ENCODE measurements at regions of chr2 and their contacts with region 1.

Region 1: DNA sequence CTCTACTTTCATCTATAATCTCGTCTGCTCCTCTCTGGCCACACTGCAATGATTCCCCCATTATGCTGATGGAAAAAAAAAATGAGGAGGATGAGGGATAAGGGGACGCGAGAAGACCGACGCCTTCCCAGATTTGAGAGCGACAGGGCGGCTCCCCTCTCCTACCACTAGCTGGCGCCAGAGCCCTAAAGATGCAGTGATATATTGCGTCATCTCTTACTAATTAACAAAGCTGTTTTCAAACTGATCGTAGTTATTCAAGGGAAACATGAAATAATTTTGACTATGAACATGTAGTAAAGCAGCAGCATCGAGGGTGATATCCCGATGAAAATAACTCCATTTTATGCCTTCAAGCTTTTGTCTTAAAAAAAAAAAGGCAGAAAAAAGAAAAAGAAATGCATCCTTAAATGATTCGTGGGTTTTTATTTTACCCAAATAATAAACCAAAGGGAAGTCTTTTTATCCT is 48.0 kb upstream of the HNRNPA3 start:
- DNase-seq: peak; percentile 90
- H3K4me3 Mint-ChIP-seq: no peak overlapping the region
- H3K27ac Mint-ChIP-seq: no peak overlapping the region
- H3K4me1 Mint-ChIP-seq: peaks cover 21% of the 10 kb centered on the region
- H3K27me3 Mint-ChIP-seq: no peaks in the 10 kb centered on the region

Region 2: GRCh38 chr2:176729706-176730569 is 434.7 kb before region 1 on chr2:
- CTCF ChIA-PET with region 1: no interaction called
- intact Hi-C with region 1: no loop called
- DNase-seq: no peak
- H3K4me3 Mint-ChIP-seq: no peak overlapping the region
- H3K27ac Mint-ChIP-seq: no peak overlapping the region
- H3K4me1 Mint-ChIP-seq: no peaks in the 10 kb centered on the region
- H3K27me3 Mint-ChIP-seq: no peaks in the 10 kb centered on the region

Region 3: DNA sequence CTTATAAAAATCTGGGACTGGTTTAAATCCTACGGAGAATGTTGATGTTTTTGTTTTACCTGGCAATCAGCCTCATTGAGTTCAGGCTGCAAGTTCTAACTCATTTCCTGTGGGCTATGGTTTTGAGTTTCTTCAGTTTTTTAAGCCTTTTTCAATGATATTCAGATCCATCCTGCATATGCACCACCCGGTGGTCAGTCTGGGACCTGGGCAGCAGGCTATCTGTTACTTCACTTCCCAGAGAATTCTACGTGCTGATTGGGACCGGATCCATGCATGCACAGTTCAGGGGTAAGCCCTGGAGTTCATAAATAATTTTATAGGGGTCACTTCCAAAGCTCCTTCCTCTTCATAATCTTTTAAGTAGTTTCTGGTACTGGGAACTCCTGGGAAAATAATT is 291.2 kb before region 1 on chr2:
- CTCF ChIA-PET with region 1: no interaction called
- intact Hi-C with region 1: no loop called
- DNase-seq: no peak
- H3K4me3 Mint-ChIP-seq: no peak overlapping the region
- H3K27ac Mint-ChIP-seq: no peak overlapping the region
- H3K4me1 Mint-ChIP-seq: no peaks in the 10 kb centered on the region
- H3K27me3 Mint-ChIP-seq: peaks cover 2% of the 10 kb centered on the region

Region 4: DNA sequence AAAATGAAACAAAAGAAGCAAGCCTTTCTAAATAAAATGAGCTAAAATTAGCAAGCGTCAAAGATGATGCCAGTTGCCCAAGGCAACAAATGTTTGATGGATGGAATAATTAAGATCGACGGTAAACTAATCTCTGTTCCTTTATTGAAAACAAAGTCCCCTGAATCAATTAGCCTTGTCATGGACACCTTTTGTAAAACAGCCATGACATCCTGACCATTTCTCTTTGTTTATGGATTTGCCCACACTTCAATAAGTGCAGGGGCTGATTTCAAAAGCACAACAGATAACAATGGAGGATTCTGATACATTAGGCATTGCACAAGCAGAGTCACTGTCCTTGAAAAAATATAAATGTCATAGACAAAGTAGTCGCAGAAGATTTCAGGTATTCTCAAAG is 112.1 kb before region 1 on chr2:
- CTCF ChIA-PET with region 1: no interaction called
- intact Hi-C with region 1: no loop called
- DNase-seq: no peak
- H3K4me3 Mint-ChIP-seq: no peak overlapping the region
- H3K27ac Mint-ChIP-seq: no peak overlapping the region
- H3K4me1 Mint-ChIP-seq: no peaks in the 10 kb centered on the region
- H3K27me3 Mint-ChIP-seq: peaks cover 7% of the 10 kb centered on the region

Region 5: DNA sequence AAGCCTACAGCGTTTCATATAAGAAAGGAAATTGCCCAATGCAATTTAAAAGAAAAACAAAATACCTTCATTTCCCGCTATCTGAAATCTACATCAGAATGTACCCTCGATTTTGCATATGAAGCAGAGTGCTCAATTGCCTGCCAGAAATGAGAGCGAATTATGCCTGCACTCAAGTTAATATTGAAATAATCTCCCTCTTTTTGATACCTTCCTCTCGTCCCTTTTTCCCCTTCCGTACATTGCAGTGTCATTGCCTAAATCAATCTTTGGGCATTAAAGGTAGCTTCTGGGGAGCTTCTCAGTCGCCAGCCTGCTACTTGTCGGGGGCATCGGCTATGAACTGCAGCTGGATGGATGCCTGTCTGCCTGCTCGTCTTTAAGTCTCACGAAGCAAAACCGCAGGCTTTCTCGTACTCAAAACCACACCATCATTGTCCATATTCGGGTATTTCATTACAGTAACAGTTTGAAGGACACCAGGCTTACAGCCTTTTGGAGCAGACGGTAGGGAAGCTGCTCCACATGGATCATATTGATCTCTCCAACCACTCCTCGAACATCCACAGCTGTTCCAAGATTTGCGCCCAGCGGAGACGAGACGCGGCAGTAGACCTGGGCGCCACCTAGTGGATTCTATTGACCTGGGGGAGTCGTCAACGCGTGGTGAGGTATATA is 16.0 kb before region 1 on chr2:
- CTCF ChIA-PET with region 1: interaction called, 43 read pairs
- intact Hi-C with region 1: loop called (anchors 1 kb)
- DNase-seq: peak; percentile 85
- H3K4me3 Mint-ChIP-seq: peak overlapping the region; percentile 82
- H3K27ac Mint-ChIP-seq: no peak overlapping the region
- H3K4me1 Mint-ChIP-seq: peaks cover 10% of the 10 kb centered on the region
- H3K27me3 Mint-ChIP-seq: peaks cover 22% of the 10 kb centered on the region

Region 6: GRCh38 chr2:177212106-177212890 is 47.7 kb after region 1 on chr2 and contains the start of gene HNRNPA3:
- CTCF ChIA-PET with region 1: interaction called, 6 read pairs
- intact Hi-C with region 1: loop called (anchors 1 kb)
- DNase-seq: peak; percentile 99
- H3K4me3 Mint-ChIP-seq: peak within 1 kb of the TSS; percentile 97
- H3K27ac Mint-ChIP-seq: peak within 1 kb of the TSS; percentile 100
- H3K4me1 Mint-ChIP-seq: peaks cover 43% of the 10 kb centered on the region
- H3K27me3 Mint-ChIP-seq: no peaks in the 10 kb centered on the region
- total RNA-seq, gene HNRNPA3: 312 to 340 TPM

Region 7: GRCh38 chr2:177263451-177264208 is 99.0 kb after region 1 on chr2:
- CTCF ChIA-PET with region 1: interaction called, 67 read pairs
- intact Hi-C with region 1: loop called (anchors 1 kb)
- DNase-seq: peak; percentile 95
- H3K4me3 Mint-ChIP-seq: peak overlapping the region; percentile 92
- H3K27ac Mint-ChIP-seq: peak overlapping the region; percentile 99
- H3K4me1 Mint-ChIP-seq: peaks cover 53% of the 10 kb centered on the region
- H3K27me3 Mint-ChIP-seq: no peaks in the 10 kb centered on the region

Region 8: DNA sequence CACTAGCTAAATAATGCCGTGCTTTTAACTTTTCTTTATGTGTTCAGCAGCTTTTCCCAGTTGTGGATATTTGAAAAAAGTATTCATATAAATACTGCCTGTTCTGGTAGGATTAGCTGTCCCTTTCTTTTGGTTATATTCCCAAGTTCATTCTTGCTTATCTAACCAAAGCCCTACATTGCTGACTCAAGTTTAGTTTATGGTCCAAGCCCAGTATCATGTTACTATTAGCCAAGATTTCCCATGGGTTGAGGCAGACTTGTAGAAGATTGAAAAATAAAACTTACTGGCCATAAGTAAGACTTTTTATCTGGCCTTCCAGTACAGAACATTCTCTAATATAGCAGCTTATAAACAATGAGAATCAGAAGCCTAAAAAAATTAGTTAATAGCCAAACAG is 149.6 kb after region 1 on chr2:
- CTCF ChIA-PET with region 1: interaction called, 11 read pairs
- intact Hi-C with region 1: no loop called
- DNase-seq: no peak
- H3K4me3 Mint-ChIP-seq: no peak overlapping the region
- H3K27ac Mint-ChIP-seq: no peak overlapping the region
- H3K4me1 Mint-ChIP-seq: peaks cover 17% of the 10 kb centered on the region
- H3K27me3 Mint-ChIP-seq: no peaks in the 10 kb centered on the region

Region 9: GRCh38 chr2:177552422-177553175 is 388.0 kb after region 1 on chr2:
- CTCF ChIA-PET with region 1: no interaction called
- intact Hi-C with region 1: loop called (anchors 1 kb)
- DNase-seq: peak; percentile 93
- H3K4me3 Mint-ChIP-seq: peak overlapping the region; percentile 88
- H3K27ac Mint-ChIP-seq: peak overlapping the region; percentile 99
- H3K4me1 Mint-ChIP-seq: peaks cover 8% of the 10 kb centered on the region
- H3K27me3 Mint-ChIP-seq: no peaks in the 10 kb centered on the region

Region 10: GRCh38 chr2:177724398-177725287 is 560.0 kb after region 1 on chr2:
- CTCF ChIA-PET with region 1: interaction called, 4 read pairs
- intact Hi-C with region 1: loop called (anchors 1 kb)
- DNase-seq: peak; percentile 72
- H3K4me3 Mint-ChIP-seq: no peak overlapping the region
- H3K27ac Mint-ChIP-seq: no peak overlapping the region
- H3K4me1 Mint-ChIP-seq: peaks cover 2% of the 10 kb centered on the region
- H3K27me3 Mint-ChIP-seq: peaks cover 11% of the 10 kb centered on the region

Measured in activated naive CD4-positive, alpha-beta T cell treated with anti-CD3 and anti-CD28 coated beads for 36 hours (primary cell).